Common myeloid progenitor, CD34-positive (primary cell): ENCODE measurements at regions of chr12 and their contacts with region 1.

Region 1: GRCh38 chr12:106282457-106283097 is 20.0 kb upstream of the TCP11L2 start:
- DNase-seq: peak; percentile 58 to 77 (median 73)
- H3K4me3 ChIP-seq: no peak overlapping the region
- H3K27ac ChIP-seq: no peak overlapping the region
- H3K4me1 ChIP-seq: peaks cover 0 to 7% (median 1%) of the 10 kb centered on the region in 4 experiments
- H3K27me3 ChIP-seq: peaks cover 0 to 2% (median 0%) of the 10 kb centered on the region in 5 experiments

Region 2: GRCh38 chr12:106249411-106250135 is 33.0 kb before region 1 on chr12:
- CTCF ChIA-PET with region 1: interaction called, 13 read pairs
- POLR2A ChIA-PET with region 1: no interaction called
- DNase-seq: peak in 1 of 3 donors; percentile 16
- H3K4me3 ChIP-seq: no peak overlapping the region
- H3K27ac ChIP-seq: no peak overlapping the region
- H3K4me1 ChIP-seq: peaks cover 3 to 23% (median 21%) of the 10 kb centered on the region in 4 experiments
- H3K27me3 ChIP-seq: peaks cover 0 to 29% (median 1%) of the 10 kb centered on the region in 5 experiments

Region 3: DNA sequence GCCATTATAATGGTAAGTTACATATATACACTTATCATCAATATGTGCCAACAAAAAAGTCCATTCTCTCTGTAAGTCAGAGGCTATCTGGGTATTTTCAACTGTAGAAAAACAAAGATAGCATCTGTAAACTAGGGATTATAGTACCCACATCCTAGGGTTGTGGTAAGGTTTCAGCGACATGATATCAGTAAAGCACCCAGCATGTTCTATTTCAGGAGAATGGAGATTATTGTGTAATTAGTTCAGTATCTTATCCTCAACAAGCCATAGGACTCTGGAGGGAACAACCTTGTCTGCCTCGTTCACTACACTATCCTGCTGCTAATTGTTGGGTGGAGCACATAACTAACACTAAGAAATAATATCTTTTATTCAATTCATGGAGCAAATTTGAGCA is 15.0 kb before region 1 on chr12:
- CTCF ChIA-PET with region 1: interaction called, 10 read pairs
- POLR2A ChIA-PET with region 1: interaction called, 3 read pairs
- DNase-seq: peak in 2 of 3 donors; percentile 42 to 59
- H3K4me3 ChIP-seq: no peak overlapping the region
- H3K27ac ChIP-seq: no peak overlapping the region
- H3K4me1 ChIP-seq: peaks cover 8 to 15% (median 13%) of the 10 kb centered on the region in 4 experiments
- H3K27me3 ChIP-seq: no peaks in the 10 kb centered on the region

Region 4: GRCh38 chr12:106296193-106296877 is 13.8 kb after region 1 on chr12:
- CTCF ChIA-PET with region 1: interaction called, 19 read pairs
- POLR2A ChIA-PET with region 1: no interaction called
- DNase-seq: no peak
- H3K4me3 ChIP-seq: no peak overlapping the region
- H3K27ac ChIP-seq: no peak overlapping the region
- H3K4me1 ChIP-seq: peaks cover 3 to 9% (median 5%) of the 10 kb centered on the region in 4 experiments
- H3K27me3 ChIP-seq: no peaks in the 10 kb centered on the region

Region 5: GRCh38 chr12:106302401-106303201 is 20.0 kb after region 1 on chr12 and contains the start of gene TCP11L2:
- CTCF ChIA-PET with region 1: interaction called, 13 read pairs
- POLR2A ChIA-PET with region 1: no interaction called
- DNase-seq: peak; percentile 83 to 91 (median 88)
- H3K4me3 ChIP-seq: peak within 1 kb of the TSS; percentile 85 to 98 (median 93)
- H3K27ac ChIP-seq: peak within 1 kb of the TSS; percentile 99
- H3K4me1 ChIP-seq: peaks cover 20 to 48% (median 36%) of the 10 kb centered on the region in 4 experiments
- H3K27me3 ChIP-seq: no peaks in the 10 kb centered on the region